ENCODE measurements at regions of chr14 and their contacts with region 1.

Region 1: GRCh38 chr14:22653012-22653621 is 9.0 kb upstream of the OR6J1 start:
- DNase-seq: no peak
- ATAC-seq: peak; percentile 89
- H3K4me3 ChIP-seq: no peak overlapping the region
- H3K27ac ChIP-seq: no peak overlapping the region
- H3K4me1 ChIP-seq: no peaks in the 10 kb centered on the region
- H3K27me3 ChIP-seq: no peaks in the 10 kb centered on the region
- CTCF ChIP-seq: peak; percentile 87 to 92 (median 88)
- EP300 ChIP-seq: no peak
- POLR2A ChIP-seq: no peak
- RAD21 ChIP-seq: peak; percentile 91

Region 2: GRCh38 chr14:22314181-22314820 is 338.8 kb before region 1 on chr14:
- CTCF ChIA-PET with region 1: interaction called, 7 read pairs
- POLR2A ChIA-PET with region 1: no interaction called
- RAD21 ChIA-PET with region 1: interaction called, 9 read pairs
- SMC1A ChIA-PET with region 1: interaction called, 4 read pairs
- in situ Hi-C with region 1: no loop called
- intact Hi-C with region 1: loop called (anchors 10 kb)
- DNase-seq: peak; percentile 48
- ATAC-seq: peak; percentile 98
- H3K4me3 ChIP-seq: no peak overlapping the region
- H3K27ac ChIP-seq: no peak overlapping the region
- H3K4me1 ChIP-seq: no peaks in the 10 kb centered on the region
- H3K27me3 ChIP-seq: no peaks in the 10 kb centered on the region
- CTCF ChIP-seq: peak; percentile 55 to 80 (median 69); a peak in 5 of 6 replicates
- EP300 ChIP-seq: no peak
- POLR2A ChIP-seq: no peak
- RAD21 ChIP-seq: peak; percentile 75

Region 3: DNA sequence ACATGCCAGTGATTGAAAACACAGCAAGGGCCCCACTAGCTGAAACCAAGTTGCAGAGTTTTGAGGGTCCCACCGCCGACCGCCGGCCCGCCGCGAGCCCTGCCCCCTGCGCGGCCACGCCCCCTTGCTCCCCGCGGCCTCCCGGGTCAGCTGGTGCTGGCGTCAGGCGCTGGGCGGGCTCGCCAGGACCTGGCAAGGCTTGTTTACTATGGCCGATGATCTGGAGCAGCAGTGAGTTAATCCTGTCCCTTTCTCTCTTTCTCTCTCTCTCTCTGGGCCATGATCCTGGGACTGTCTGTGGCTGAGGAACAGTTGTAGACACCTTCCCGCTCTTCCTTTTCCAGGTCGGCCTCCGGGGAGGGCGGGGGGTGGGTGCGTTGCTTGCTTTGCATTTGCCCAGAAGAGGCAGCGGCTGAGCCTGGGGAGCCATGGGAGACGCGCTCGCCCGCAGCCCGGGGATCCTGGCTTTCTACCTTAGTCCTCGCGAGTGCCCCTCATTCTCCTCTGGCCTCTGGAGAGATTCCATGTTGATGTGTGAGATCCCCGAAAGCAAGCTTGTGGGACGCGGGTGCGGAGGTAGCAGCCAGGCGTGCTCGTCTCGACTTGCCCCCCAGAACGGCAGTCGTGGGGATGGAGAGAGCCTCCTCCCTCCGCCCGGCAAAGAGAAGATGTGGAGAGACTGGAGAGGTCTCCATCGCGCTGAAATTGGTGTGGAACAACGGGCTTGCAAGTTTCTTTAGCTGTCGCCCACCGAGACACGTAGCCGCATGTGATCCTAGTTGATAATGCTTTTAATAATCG is 54.8 kb before region 1 on chr14 and contains the start of gene ABHD4:
- CTCF ChIA-PET with region 1: interaction called, 9 read pairs
- POLR2A ChIA-PET with region 1: interaction called, 3 read pairs
- RAD21 ChIA-PET with region 1: interaction called, 29 read pairs
- SMC1A ChIA-PET with region 1: interaction called, 23 read pairs
- in situ Hi-C with region 1: no loop called
- intact Hi-C with region 1: no loop called
- DNase-seq: no peak
- ATAC-seq: peak; percentile 97
- H3K4me3 ChIP-seq: peak within 1 kb of the TSS; percentile 94
- H3K27ac ChIP-seq: peak within 1 kb of the TSS; percentile 45
- H3K4me1 ChIP-seq: peaks cover 19% of the 10 kb centered on the region
- H3K27me3 ChIP-seq: no peaks in the 10 kb centered on the region
- CTCF ChIP-seq: no peak
- EP300 ChIP-seq: no peak
- POLR2A ChIP-seq: peak; percentile 62; the same call in 1 of the 2 replicates
- RAD21 ChIP-seq: no peak
- polyA plus RNA-seq, gene ABHD4: 7.7 to 7.9 TPM

Region 4: GRCh38 chr14:22689186-22689585 is 36.1 kb after region 1 on chr14:
- CTCF ChIA-PET with region 1: interaction called, 11 read pairs
- POLR2A ChIA-PET with region 1: no interaction called
- RAD21 ChIA-PET with region 1: interaction called, 3 read pairs
- SMC1A ChIA-PET with region 1: no interaction called
- in situ Hi-C with region 1: no loop called
- intact Hi-C with region 1: no loop called
- DNase-seq: no peak
- ATAC-seq: peak; percentile 50
- H3K4me3 ChIP-seq: no peak overlapping the region
- H3K27ac ChIP-seq: no peak overlapping the region
- H3K4me1 ChIP-seq: no peaks in the 10 kb centered on the region
- H3K27me3 ChIP-seq: no peaks in the 10 kb centered on the region; a peak in 1 of 4 replicates
- CTCF ChIP-seq: no peak
- EP300 ChIP-seq: no peak
- POLR2A ChIP-seq: no peak
- RAD21 ChIP-seq: no peak

Region 5: GRCh38 chr14:22748631-22749068 is 95.5 kb after region 1 on chr14:
- CTCF ChIA-PET with region 1: interaction called, 13 read pairs
- POLR2A ChIA-PET with region 1: no interaction called
- RAD21 ChIA-PET with region 1: interaction called, 8 read pairs
- SMC1A ChIA-PET with region 1: interaction called, 7 read pairs
- in situ Hi-C with region 1: no loop called
- intact Hi-C with region 1: no loop called
- DNase-seq: no peak
- ATAC-seq: peak; percentile 88
- H3K4me3 ChIP-seq: peak overlapping the region; percentile 43; the same call in 1 of the 2 replicates
- H3K27ac ChIP-seq: peak overlapping the region; percentile 45
- H3K4me1 ChIP-seq: peaks cover 15% of the 10 kb centered on the region
- H3K27me3 ChIP-seq: no peaks in the 10 kb centered on the region
- CTCF ChIP-seq: 0 out of 6 replicates have a peak, but pooled peaks of 1 of the 3 experiments have one; percentile 7
- EP300 ChIP-seq: no peak
- POLR2A ChIP-seq: no peak
- RAD21 ChIP-seq: 0 out of 2 replicates have a peak, but pooled peaks have one; percentile 20

Region 6: GRCh38 chr14:22781586-22781991 is 128.5 kb after region 1 on chr14:
- CTCF ChIA-PET with region 1: interaction called, 21 read pairs
- POLR2A ChIA-PET with region 1: interaction called, 3 read pairs
- RAD21 ChIA-PET with region 1: interaction called, 3 read pairs
- SMC1A ChIA-PET with region 1: no interaction called
- in situ Hi-C with region 1: no loop called
- intact Hi-C with region 1: no loop called
- DNase-seq: no peak
- ATAC-seq: no peak
- H3K4me3 ChIP-seq: no peak overlapping the region
- H3K27ac ChIP-seq: no peak overlapping the region
- H3K4me1 ChIP-seq: peaks cover 13% of the 10 kb centered on the region
- H3K27me3 ChIP-seq: no peaks in the 10 kb centered on the region
- CTCF ChIP-seq: no peak
- EP300 ChIP-seq: no peak
- POLR2A ChIP-seq: no peak
- RAD21 ChIP-seq: no peak

Region 7: DNA sequence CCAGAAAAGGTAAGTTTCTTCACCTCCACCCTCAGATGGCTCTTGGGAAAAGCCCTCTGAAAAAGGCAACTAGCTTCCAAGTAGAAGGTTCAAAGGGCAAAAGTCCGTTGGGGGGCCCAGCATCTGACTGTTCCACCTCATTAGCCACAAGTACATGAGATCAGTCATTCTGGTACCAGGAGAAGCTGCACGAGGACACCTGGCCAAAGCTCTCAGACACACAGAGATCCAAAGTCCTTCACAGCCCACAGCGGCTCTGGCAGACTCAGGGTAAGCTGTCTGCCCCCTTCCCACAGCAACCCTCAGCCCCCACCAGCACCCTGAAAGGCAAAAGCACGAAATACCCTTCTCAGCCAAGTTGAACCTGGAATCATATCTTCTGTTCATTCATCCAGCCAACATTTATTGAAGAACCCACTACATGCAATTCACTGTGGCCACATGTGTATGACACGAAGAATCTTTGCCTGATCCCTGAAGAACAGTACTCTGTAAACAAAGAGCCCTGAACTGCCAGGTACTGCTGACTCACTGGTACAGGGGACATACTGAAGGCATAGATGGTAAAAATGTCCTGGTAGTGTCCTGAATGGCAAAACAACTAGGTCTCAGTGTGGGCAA is 143.1 kb after region 1 on chr14:
- CTCF ChIA-PET with region 1: no interaction called
- POLR2A ChIA-PET with region 1: no interaction called
- RAD21 ChIA-PET with region 1: no interaction called
- SMC1A ChIA-PET with region 1: no interaction called
- in situ Hi-C with region 1: no loop called
- intact Hi-C with region 1: no loop called
- DNase-seq: peak; percentile 78
- ATAC-seq: peak; percentile 70
- H3K4me3 ChIP-seq: 0 out of 2 replicates have a peak overlapping the region, but pooled peaks have one; percentile 6
- H3K27ac ChIP-seq: peak overlapping the region; percentile 83
- H3K4me1 ChIP-seq: peaks cover 54% of the 10 kb centered on the region
- H3K27me3 ChIP-seq: no peaks in the 10 kb centered on the region
- CTCF ChIP-seq: no peak
- EP300 ChIP-seq: peak; percentile 70 to 71
- POLR2A ChIP-seq: peak; percentile 67
- RAD21 ChIP-seq: no peak

Region 8: GRCh38 chr14:22822571-22823098 is 169.5 kb after region 1 on chr14:
- CTCF ChIA-PET with region 1: interaction called, 25 read pairs
- POLR2A ChIA-PET with region 1: no interaction called
- RAD21 ChIA-PET with region 1: interaction called, 6 read pairs
- SMC1A ChIA-PET with region 1: no interaction called
- in situ Hi-C with region 1: no loop called
- intact Hi-C with region 1: no loop called
- DNase-seq: no peak
- ATAC-seq: peak; percentile 78
- H3K4me3 ChIP-seq: peak overlapping the region; percentile 74
- H3K27ac ChIP-seq: peak overlapping the region; percentile 48
- H3K4me1 ChIP-seq: peaks cover 34% of the 10 kb centered on the region
- H3K27me3 ChIP-seq: no peaks in the 10 kb centered on the region
- CTCF ChIP-seq: peak; percentile 73 to 77 (median 76)
- EP300 ChIP-seq: 0 out of 4 replicates have a peak, but pooled peaks of 1 of the 2 experiments have one; percentile 25
- POLR2A ChIP-seq: no peak; the same call in 1 of the 2 replicates
- RAD21 ChIP-seq: peak; percentile 86

Region 9: GRCh38 chr14:22966783-22967269 is 313.7 kb after region 1 on chr14:
- CTCF ChIA-PET with region 1: no interaction called
- POLR2A ChIA-PET with region 1: no interaction called
- RAD21 ChIA-PET with region 1: no interaction called
- SMC1A ChIA-PET with region 1: no interaction called
- in situ Hi-C with region 1: no loop called
- intact Hi-C with region 1: no loop called
- DNase-seq: no peak
- ATAC-seq: no peak
- H3K4me3 ChIP-seq: no peak overlapping the region
- H3K27ac ChIP-seq: no peak overlapping the region
- H3K4me1 ChIP-seq: no peaks in the 10 kb centered on the region
- H3K27me3 ChIP-seq: no peaks in the 10 kb centered on the region
- CTCF ChIP-seq: no peak
- EP300 ChIP-seq: no peak
- POLR2A ChIP-seq: no peak
- RAD21 ChIP-seq: no peak

Region 10: DNA sequence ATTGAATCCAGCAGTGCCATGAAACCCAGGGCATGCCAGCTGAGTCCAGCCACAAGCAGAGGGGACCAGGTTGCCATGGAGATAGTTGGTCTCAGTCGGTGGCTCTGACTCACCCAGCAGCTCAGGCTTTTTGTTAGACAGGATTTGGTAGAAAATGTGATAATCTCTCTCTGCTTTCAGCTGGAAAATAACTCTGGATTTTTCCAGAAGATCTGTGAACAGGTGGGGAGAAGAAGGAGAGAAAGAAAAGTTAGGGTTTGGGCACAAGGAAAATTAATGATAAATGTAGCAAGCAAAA is 777.6 kb after region 1 on chr14:
- CTCF ChIA-PET with region 1: no interaction called
- POLR2A ChIA-PET with region 1: no interaction called
- RAD21 ChIA-PET with region 1: no interaction called
- SMC1A ChIA-PET with region 1: no interaction called
- in situ Hi-C with region 1: no loop called
- intact Hi-C with region 1: no loop called
- DNase-seq: no peak
- ATAC-seq: no peak
- H3K4me3 ChIP-seq: no peak overlapping the region
- H3K27ac ChIP-seq: no peak overlapping the region
- H3K4me1 ChIP-seq: no peaks in the 10 kb centered on the region
- H3K27me3 ChIP-seq: no peaks in the 10 kb centered on the region; a peak in 3 of 4 replicates
- CTCF ChIP-seq: no peak
- EP300 ChIP-seq: no peak
- POLR2A ChIP-seq: no peak
- RAD21 ChIP-seq: no peak

Measured in GM12878 (cell line).